PC-9 (cell line): ENCODE measurements at regions of chr12 and their contacts with region 1.

Region 1: DNA sequence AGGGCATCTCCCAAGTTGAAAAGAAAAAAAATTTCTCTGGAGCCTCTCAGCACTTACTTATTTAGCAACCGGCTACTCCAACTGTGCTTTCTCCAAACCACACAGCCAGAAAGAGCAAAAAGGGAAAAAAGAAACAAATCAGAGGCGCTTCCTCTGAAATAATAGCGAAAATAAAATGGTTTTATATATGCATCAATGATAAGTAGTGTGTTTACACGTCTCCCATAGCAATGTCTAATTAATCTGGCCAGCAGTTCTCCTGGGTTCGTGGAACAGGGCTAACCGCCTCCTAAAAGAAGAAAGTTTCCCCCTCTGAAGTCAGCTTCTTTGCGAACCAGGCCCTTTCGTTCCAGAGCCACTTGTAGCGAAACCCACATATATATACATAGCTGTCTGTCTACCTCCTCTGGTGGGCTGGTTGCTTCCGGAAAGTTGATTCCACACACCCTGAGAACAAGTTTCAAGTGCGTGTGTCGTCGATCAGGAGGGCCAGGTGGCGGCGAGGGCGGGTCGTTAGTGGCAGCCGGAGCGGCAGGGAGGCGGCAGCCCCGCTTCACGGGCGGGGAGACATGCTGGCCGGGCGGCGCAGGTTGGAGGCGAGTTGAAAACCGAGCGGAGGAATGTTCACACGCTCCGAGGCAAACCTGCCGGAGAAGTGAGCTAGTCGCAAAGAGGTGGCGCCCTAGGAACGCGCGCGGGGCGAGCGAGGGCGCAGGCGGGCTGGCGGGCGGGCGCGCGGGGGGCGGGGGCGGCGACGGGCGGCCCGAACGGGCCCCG is 2.7 kb downstream of the PTHLH start:
- DNase-seq: peak; percentile 74 to 89
- H3K4me3 ChIP-seq: peak overlapping the region; percentile 65
- H3K27ac ChIP-seq: peak overlapping the region; percentile 33
- H3K4me1 ChIP-seq: peaks cover 42% of the 10 kb centered on the region
- H3K27me3 ChIP-seq: no peaks in the 10 kb centered on the region
- CTCF ChIP-seq: no peak; the same call in 1 of the 2 replicates

Region 2: GRCh38 chr12:27779920-27780611 is 189.7 kb before region 1 on chr12 and contains the starts of genes KLHL42 and MANSC4:
- CTCF ChIA-PET with region 1: no interaction called
- POLR2A ChIA-PET with region 1: no interaction called
- intact Hi-C with region 1: loop called (anchors 2 kb)
- DNase-seq: peak; percentile 59 to 77
- H3K4me3 ChIP-seq: peak within 1 kb of the TSS; percentile 74
- H3K27ac ChIP-seq: peak within 1 kb of the TSS; percentile 64
- H3K4me1 ChIP-seq: peaks cover 45% of the 10 kb centered on the region
- H3K27me3 ChIP-seq: no peaks in the 10 kb centered on the region
- CTCF ChIP-seq: no peak; the same call in 1 of the 2 replicates
- total RNA-seq, gene KLHL42: 33.6 and 34.5 TPM in 2 replicates
- total RNA-seq, gene MANSC4: not detected in 2 replicates

Region 3: DNA sequence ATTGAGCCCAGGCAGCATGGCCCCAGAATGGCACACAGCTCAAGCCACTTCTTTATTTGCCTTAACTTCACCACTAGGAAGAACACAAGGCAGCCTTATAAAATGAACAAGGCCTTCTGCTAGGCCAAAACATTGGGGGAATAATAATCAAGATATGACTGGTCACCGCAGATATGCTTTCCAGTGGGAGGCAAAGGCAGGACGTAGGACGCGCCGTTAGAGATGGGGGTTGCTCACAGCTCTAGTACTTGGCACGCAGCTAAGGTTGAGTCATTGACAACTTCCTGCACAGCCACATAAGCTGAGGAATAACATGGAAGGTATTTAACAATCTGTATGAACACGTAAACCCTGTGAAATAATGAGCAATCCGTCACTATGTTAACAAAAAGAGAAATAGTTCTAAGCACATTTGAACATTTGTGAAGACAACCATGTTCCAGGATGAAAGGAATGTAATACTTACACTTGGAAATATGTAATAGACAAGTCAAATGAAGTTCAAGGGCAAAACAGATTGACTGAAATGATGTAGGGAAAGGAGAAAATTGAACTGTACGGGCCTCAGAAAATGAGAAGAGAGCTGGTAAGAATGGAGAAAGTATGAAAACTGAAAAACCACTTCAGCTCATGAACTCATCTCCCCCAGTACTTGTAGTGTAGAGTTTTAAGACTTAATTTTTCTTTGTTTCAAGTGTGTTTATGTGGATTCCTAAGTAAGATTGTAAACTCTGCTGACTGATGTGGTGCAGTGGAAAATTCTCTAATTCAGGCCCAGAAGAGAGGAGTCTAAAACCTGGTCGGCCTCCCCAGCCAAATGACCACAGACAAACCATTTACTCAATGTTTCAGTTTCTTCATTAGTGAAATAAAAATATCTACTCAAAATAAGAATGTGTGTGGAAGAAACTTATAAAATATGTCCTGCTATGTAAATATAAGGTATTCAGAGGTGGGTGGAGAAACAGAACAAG is 161.1 kb after region 1 on chr12:
- CTCF ChIA-PET with region 1: no interaction called
- POLR2A ChIA-PET with region 1: no interaction called
- intact Hi-C with region 1: loop called (anchors 5 kb)
- DNase-seq: peak; percentile 62 to 73
- H3K4me3 ChIP-seq: no peak overlapping the region
- H3K27ac ChIP-seq: peak overlapping the region; percentile 37; the same call in 1 of the 2 replicates
- H3K4me1 ChIP-seq: no peaks in the 10 kb centered on the region
- H3K27me3 ChIP-seq: no peaks in the 10 kb centered on the region
- CTCF ChIP-seq: no peak

Region 4: DNA sequence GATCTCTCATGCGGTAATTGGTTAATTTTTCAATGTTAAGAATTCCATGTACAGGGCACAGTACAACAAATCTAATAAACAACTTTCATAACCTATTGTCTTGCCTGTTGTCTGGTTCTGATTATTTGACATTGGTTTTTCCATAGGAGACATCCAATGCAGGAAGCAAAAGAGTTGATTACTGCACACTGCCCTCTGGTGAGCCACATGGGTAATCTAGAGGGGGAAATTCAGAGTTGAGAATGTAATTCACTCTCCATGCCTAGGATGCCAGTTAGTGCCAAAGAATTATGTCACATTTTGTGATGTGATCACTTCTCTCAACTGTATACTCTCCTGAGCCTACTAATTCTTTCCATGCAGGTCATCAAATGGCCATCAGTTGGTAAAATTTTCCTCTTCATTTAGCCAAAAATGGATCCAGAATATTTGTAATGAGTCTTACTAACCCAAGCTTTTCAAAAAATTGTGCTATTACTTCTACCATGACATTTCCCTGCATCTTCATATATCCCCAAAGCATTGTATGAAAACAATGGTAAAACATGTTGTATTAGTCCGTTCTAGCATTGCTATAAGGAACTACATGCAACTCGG is 202.7 kb after region 1 on chr12:
- CTCF ChIA-PET with region 1: interaction called, 3 read pairs
- POLR2A ChIA-PET with region 1: no interaction called
- intact Hi-C with region 1: loop called (anchors 1 kb)
- DNase-seq: peak in 1 of 2 experiments; percentile 31
- H3K4me3 ChIP-seq: no peak overlapping the region
- H3K27ac ChIP-seq: no peak overlapping the region
- H3K4me1 ChIP-seq: no peaks in the 10 kb centered on the region
- H3K27me3 ChIP-seq: no peaks in the 10 kb centered on the region
- CTCF ChIP-seq: peak; percentile 72

Region 5: DNA sequence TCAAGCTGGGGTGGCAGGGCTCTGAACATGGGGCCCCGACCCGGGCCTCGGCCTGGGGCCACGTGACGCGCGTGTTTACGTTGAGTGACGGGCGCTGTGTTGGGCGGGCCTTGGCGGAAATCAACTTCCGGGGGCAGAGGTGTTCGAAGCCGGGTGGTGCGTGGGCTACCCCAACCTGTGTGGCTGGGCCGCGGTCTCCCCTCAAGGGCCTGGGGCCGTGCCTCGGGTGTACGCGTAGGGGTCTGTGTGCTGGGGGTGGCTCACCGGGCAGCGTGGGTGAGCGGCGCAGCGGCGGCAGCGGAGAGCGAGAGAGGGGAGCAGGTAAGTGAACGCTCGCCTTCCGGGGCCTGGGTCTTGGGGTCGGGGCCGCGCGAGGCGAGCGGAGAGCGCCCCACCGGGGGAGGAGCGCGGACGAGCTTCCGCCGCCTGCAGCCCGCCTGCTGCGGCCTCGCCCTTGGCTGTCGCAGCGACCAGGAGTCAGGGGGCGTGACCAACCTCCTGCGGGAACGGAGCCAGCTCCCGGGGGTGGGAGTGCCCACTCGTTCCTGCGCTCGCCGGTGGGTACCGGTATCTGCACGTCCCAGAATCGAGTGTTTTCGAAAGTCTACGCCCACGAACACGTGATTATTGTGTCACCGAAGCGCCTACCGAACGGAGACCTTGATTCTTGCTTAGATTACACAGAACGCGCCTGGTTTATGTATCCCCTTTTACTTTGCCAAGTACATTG is 220.7 kb after region 1 on chr12 and contains the start of gene CCDC91:
- CTCF ChIA-PET with region 1: interaction called, 4 read pairs
- POLR2A ChIA-PET with region 1: no interaction called
- intact Hi-C with region 1: loop called (anchors 5 kb)
- DNase-seq: peak; percentile 67 to 92
- H3K4me3 ChIP-seq: peak within 1 kb of the TSS; percentile 66
- H3K27ac ChIP-seq: peak within 1 kb of the TSS; percentile 95
- H3K4me1 ChIP-seq: peaks cover 26% of the 10 kb centered on the region
- H3K27me3 ChIP-seq: no peaks in the 10 kb centered on the region
- CTCF ChIP-seq: no peak
- total RNA-seq, gene CCDC91: 30.7 and 38.9 TPM in 2 replicates

Region 6: GRCh38 chr12:28550757-28551704 is 581.2 kb after region 1 on chr12:
- CTCF ChIA-PET with region 1: no interaction called
- POLR2A ChIA-PET with region 1: no interaction called
- intact Hi-C with region 1: no loop called
- DNase-seq: peak; percentile 16 to 71
- H3K4me3 ChIP-seq: no peak overlapping the region
- H3K27ac ChIP-seq: peak overlapping the region; percentile 70
- H3K4me1 ChIP-seq: peaks cover 18% of the 10 kb centered on the region
- H3K27me3 ChIP-seq: no peaks in the 10 kb centered on the region
- CTCF ChIP-seq: no peak

Region 7: DNA sequence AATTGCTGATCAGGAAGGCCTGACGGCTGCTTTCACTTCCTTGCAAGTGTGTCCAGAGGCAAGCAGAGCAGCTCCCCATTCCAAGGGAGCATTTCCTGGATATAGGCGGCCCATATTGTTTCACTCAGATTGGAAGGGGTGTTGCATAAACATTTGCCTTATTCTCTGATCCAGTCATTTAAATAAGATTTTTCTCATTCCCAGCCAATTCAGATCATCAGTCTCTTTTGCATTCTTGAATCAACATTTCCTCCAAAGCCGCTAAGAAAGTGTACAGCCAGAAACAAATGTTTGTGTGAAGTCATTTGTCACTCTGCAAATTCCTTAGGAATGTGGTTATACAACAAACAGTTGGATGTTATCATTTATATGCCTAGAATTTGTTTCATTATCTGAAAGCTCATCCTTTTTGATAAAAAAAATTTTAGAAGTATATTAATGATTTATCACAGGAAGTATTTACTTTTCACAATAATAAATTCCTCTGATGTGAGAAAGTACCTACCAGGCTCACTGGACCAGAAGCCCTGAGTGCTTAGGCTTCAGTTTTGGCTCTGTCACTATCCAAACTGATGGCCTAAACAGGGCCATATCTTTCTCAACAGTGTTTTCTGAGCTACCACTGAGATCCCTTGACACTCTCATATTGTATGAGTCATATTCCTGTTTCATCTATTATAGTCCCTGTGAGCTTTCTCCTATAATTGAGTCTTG is 600.0 kb after region 1 on chr12:
- CTCF ChIA-PET with region 1: no interaction called
- POLR2A ChIA-PET with region 1: no interaction called
- intact Hi-C with region 1: loop called (anchors 5 kb)
- DNase-seq: peak; percentile 38 to 96
- H3K4me3 ChIP-seq: peak overlapping the region; percentile 6; the same call in 1 of the 2 replicates
- H3K27ac ChIP-seq: peak overlapping the region; percentile 77
- H3K4me1 ChIP-seq: peaks cover 41% of the 10 kb centered on the region
- H3K27me3 ChIP-seq: no peaks in the 10 kb centered on the region
- CTCF ChIP-seq: no peak

Region 8: DNA sequence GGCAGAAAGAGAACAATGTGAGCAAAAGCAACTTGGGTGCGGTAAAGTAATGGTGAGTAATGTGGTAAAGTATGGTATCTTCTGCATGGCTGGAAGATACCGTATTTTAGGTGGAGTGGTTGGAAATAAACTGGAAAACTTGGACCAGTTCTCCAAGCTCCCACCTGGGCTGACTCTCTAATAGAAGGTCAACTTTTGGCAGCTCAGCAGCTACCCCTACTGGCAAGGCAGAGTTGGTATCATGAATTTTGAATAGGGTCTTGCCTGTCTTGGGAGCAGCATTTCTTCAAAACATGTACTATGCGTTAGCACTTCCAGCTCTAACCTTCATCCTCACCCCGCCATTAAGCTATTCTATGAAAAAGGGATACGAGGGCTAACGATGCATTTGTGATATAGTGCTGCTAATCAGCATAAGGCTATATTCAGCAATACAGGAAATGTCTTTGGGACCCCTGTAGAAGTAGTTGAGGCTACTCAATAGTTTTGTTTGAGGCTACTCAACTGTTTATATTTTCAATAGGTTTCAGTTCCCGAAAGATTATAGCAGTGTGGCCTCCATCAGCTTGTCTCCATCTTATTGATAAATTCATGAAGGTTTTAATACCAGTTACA is 902.9 kb after region 1 on chr12:
- CTCF ChIA-PET with region 1: no interaction called
- POLR2A ChIA-PET with region 1: no interaction called
- intact Hi-C with region 1: loop called (anchors 10 kb)
- DNase-seq: peak; percentile 56 to 62
- H3K4me3 ChIP-seq: no peak overlapping the region
- H3K27ac ChIP-seq: no peak overlapping the region
- H3K4me1 ChIP-seq: 0 out of 2 replicates have a peak, but pooled peaks cover 11% of the 10 kb centered on the region
- H3K27me3 ChIP-seq: no peaks in the 10 kb centered on the region
- CTCF ChIP-seq: peak; percentile 87